ENCODE measurements at regions of chr15 and their contacts with region 1.

Region 1: GRCh38 chr15:33700695-33701304 is 267.5 kb upstream of the CHRM5 start:
- DNase-seq: peak; percentile 65 to 89
- H3K4me3 ChIP-seq: no peak overlapping the region
- H3K27ac ChIP-seq: no peak overlapping the region
- H3K4me1 ChIP-seq: peaks cover 0 to 10% (median 0%) of the 10 kb centered on the region in 4 donors
- H3K27me3 ChIP-seq: peaks cover 0 to 4% (median 0%) of the 10 kb centered on the region in 3 donors
- CTCF ChIP-seq: peak in 5 of 7 experiments; percentile 78 to 91 (median 79)
- EP300 ChIP-seq: no peak
- POLR2A ChIP-seq: no peak

Region 2: DNA sequence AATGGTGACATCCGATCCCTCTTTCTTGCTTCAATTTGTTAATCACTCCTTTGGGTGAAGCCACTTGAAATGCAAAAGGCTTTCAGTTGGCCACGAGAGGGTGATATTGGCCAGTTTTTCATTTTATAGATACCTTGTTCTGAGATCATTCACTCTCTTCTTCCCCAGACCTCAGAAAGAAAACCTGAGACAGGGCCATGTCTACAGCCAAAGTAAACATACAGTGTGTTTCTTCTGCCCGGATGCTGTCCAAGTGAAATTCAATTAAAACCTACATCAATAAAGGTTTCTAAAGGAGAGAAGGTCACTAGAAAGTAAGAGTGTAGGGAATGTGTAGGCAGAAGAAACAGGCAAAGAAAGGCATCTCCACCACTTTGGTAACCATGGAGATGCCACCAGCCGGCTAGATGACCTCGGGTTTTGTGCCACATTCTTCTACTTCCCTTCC is 466.8 kb before region 1 on chr15:
- intact Hi-C with region 1: loop called (anchors 10 kb)
- DNase-seq: peak in 1 of 2 donors; percentile 40
- H3K4me3 ChIP-seq: no peak overlapping the region
- H3K27ac ChIP-seq: no peak overlapping the region
- H3K4me1 ChIP-seq: no peaks in the 10 kb centered on the region
- H3K27me3 ChIP-seq: peaks cover 0 to 13% (median 0%) of the 10 kb centered on the region in 3 donors
- CTCF ChIP-seq: peak in 4 of 7 experiments; percentile 12 to 29 (median 16)
- EP300 ChIP-seq: no peak
- POLR2A ChIP-seq: no peak

Region 3: GRCh38 chr15:33292717-33293307 is 408.0 kb before region 1 on chr15:
- intact Hi-C with region 1: loop called (anchors 5 kb)
- DNase-seq: peak; percentile 55 to 79
- H3K4me3 ChIP-seq: no peak overlapping the region
- H3K27ac ChIP-seq: no peak overlapping the region
- H3K4me1 ChIP-seq: peaks cover 0 to 11% (median 5%) of the 10 kb centered on the region in 4 donors
- H3K27me3 ChIP-seq: peaks cover 0 to 5% (median 0%) of the 10 kb centered on the region in 3 donors
- CTCF ChIP-seq: peak in 5 of 7 experiments; percentile 12 to 47 (median 45)
- EP300 ChIP-seq: no peak
- POLR2A ChIP-seq: no peak

Region 4: GRCh38 chr15:33675246-33675645 is 25.6 kb before region 1 on chr15:
- intact Hi-C with region 1: no loop called
- DNase-seq: peak in 1 of 2 donors; percentile 8
- H3K4me3 ChIP-seq: no peak overlapping the region
- H3K27ac ChIP-seq: no peak overlapping the region
- H3K4me1 ChIP-seq: no peaks in the 10 kb centered on the region
- H3K27me3 ChIP-seq: no peaks in the 10 kb centered on the region
- CTCF ChIP-seq: no peak
- EP300 ChIP-seq: no peak
- POLR2A ChIP-seq: no peak